Pancreas (tissue), 10 donors: ENCODE measurements at regions of chr10 and their contacts with region 1.

Region 1: GRCh38 chr10:115355162-115355760 is 262.1 kb downstream of the ATRNL1 start:
- DNase-seq: peak in 3 of 6 donors; percentile 32 to 48 (median 44)
- ATAC-seq: peak; percentile 71 to 87 (median 79)
- H3K4me3 ChIP-seq: no peak overlapping the region
- H3K27ac ChIP-seq: no peak overlapping the region
- H3K4me1 ChIP-seq: no peaks in the 10 kb centered on the region
- H3K27me3 ChIP-seq: no peaks in the 10 kb centered on the region
- CTCF ChIP-seq: peak in 3 of 4 donors; percentile 35 to 48 (median 47)

Region 2: DNA sequence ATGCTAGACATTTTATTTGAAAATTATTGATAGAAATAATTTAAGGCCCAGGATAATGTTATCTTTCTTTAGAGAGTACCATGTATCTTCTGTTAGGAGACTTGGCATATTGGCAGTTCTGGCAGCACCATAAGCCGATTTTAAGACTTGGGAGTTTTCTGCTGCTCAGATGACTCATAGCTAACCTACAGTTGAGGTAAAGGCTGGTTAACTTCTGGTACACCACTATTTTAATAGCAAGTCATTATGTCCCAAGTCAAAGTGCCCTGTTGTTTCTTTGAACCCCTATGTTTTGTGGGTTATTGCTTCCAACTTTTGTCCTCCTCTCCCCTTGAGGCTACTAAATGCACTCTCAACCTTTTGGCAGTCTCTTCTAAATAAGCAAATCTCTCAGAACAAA is 236.9 kb before region 1 on chr10:
- intact Hi-C with region 1: no loop called
- DNase-seq: no peak
- ATAC-seq: no peak
- H3K4me3 ChIP-seq: no peak overlapping the region
- H3K27ac ChIP-seq: no peak overlapping the region
- H3K4me1 ChIP-seq: no peaks in the 10 kb centered on the region
- H3K27me3 ChIP-seq: no peaks in the 10 kb centered on the region
- CTCF ChIP-seq: no peak

Region 3: GRCh38 chr10:116385994-116386809 is 1030.9 kb after region 1 on chr10:
- intact Hi-C with region 1: loop called in 1 of 3 experiments (anchors 10 kb)
- DNase-seq: no peak
- ATAC-seq: peak in 3 of 4 donors; percentile 61 to 67 (median 65)
- H3K4me3 ChIP-seq: no peak overlapping the region
- H3K27ac ChIP-seq: no peak overlapping the region
- H3K4me1 ChIP-seq: no peaks in the 10 kb centered on the region
- H3K27me3 ChIP-seq: no peaks in the 10 kb centered on the region
- CTCF ChIP-seq: peak in 3 of 4 donors; percentile 24 to 42 (median 37)